A673 (cell line): ENCODE measurements at regions of chr6 and their contacts with region 1.

Region 1: DNA sequence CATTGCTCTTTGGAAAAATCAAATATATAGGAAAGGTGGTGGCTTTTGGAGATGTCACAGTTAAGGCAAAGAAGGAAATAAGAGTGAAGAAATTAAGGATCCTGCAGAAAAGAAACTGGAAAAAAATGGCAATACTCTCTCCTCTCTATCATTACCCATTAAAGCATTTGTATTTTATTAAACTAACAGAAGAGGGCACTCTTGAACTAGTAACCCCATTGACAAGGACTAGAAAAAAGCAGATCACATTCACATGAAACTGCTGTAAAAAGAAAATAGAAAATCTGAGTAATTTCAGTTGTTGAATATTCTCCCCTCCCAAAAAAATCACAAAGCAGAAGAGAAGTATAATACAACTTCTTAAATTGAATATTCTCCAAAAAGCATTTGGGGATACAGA is 104.1 kb upstream of the SLC35B3 start:
- DNase-seq: peak; percentile 72
- H3K4me3 ChIP-seq: no peak overlapping the region
- H3K27ac ChIP-seq: no peak overlapping the region
- H3K4me1 ChIP-seq: no peaks in the 10 kb centered on the region
- H3K27me3 ChIP-seq: no peaks in the 10 kb centered on the region
- CTCF ChIP-seq: peak; percentile 62

Region 2: GRCh38 chr6:8608737-8609136 is 69.3 kb after region 1 on chr6:
- CTCF ChIA-PET with region 1: no interaction called
- POLR2A ChIA-PET with region 1: no interaction called
- intact Hi-C with region 1: no loop called
- DNase-seq: no peak
- H3K4me3 ChIP-seq: no peak overlapping the region
- H3K27ac ChIP-seq: no peak overlapping the region
- H3K4me1 ChIP-seq: no peaks in the 10 kb centered on the region
- H3K27me3 ChIP-seq: no peaks in the 10 kb centered on the region
- CTCF ChIP-seq: no peak

Region 3: DNA sequence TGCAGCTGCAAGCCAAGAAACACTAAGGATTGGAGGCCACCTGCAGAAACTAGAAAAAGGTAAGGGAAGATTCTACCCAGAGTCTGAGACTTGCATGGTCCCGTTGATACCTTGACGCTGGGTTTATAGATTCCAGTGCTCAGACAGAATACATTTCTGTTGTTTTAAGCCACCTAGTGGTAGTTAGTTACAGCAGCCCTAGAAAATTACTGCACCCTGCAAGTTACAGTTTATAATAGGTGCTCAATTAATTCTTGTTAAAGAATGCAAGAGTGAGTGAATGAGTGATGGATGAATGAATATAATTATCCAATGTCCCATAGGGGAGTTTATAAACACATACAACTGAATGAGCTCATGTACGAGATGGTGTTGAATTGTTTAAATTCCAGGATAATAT is 349.0 kb after region 1 on chr6:
- CTCF ChIA-PET with region 1: no interaction called
- POLR2A ChIA-PET with region 1: no interaction called
- intact Hi-C with region 1: loop called (anchors 2 kb)
- DNase-seq: peak; percentile 52
- H3K4me3 ChIP-seq: no peak overlapping the region
- H3K27ac ChIP-seq: no peak overlapping the region
- H3K4me1 ChIP-seq: no peaks in the 10 kb centered on the region
- H3K27me3 ChIP-seq: no peaks in the 10 kb centered on the region
- CTCF ChIP-seq: peak; percentile 65

Region 4: GRCh38 chr6:9412951-9413559 is 873.6 kb after region 1 on chr6:
- CTCF ChIA-PET with region 1: no interaction called
- POLR2A ChIA-PET with region 1: no interaction called
- intact Hi-C with region 1: loop called (anchors 10 kb)
- DNase-seq: peak; percentile 80
- H3K4me3 ChIP-seq: no peak overlapping the region
- H3K27ac ChIP-seq: no peak overlapping the region
- H3K4me1 ChIP-seq: peaks cover 4% of the 10 kb centered on the region
- H3K27me3 ChIP-seq: no peaks in the 10 kb centered on the region
- CTCF ChIP-seq: peak; percentile 91